Activated T-helper 2 cell treated with anti-CD3 and anti-CD28 coated beads, Interferon-gamma antibody, Interleukin-2, Interleukin-4, amounts not matched to agents 10 μg/mL and 5 μg/mL and 100 μg/mL, durations not matched to agents 14 hours and 24 hours and 36 hours (primary cell): ENCODE measurements at regions of chr2 and their contacts with region 1.

Region 1: DNA sequence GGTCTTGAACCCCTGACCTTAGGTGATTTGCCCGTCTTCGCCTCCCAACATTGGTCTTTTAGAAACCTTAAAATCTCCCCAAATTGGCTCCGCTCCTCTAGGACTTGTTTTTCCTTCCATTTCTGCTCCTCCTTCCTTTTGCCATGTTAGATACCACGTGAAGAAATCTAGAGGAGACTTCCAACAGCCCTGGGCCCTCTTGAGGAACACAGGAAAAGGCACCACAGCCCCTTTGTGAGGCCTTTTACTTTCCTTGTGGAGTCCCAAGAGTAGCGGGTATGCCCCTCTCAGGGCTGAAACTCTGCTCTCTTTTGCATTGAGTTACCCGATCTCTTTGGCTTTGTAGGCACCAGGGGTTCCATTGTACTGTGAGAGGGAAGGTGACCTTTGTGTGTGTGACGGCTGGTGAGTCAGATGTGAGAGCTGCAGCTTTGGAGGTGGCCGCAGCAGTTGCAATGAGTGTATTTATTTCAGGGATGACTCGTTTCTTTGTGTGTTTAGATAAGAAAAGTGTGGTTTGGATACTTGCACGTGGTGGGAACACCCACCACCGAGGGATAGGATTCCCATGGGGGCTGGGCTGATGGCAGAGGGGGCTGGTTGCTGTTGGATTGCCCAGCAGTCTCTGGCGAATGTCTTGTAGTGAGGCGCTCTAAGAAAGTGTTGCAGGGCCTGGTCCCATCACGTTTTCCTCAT is 218.4 kb upstream of the HS6ST1 start:
- DNase-seq: no peak
- H3K4me3 Mint-ChIP-seq: peak overlapping the region; percentile 35
- H3K27ac Mint-ChIP-seq: peak overlapping the region; percentile 88
- H3K4me1 Mint-ChIP-seq: peaks cover 44% of the 10 kb centered on the region
- H3K27me3 Mint-ChIP-seq: peaks cover 3% of the 10 kb centered on the region

Region 2: DNA sequence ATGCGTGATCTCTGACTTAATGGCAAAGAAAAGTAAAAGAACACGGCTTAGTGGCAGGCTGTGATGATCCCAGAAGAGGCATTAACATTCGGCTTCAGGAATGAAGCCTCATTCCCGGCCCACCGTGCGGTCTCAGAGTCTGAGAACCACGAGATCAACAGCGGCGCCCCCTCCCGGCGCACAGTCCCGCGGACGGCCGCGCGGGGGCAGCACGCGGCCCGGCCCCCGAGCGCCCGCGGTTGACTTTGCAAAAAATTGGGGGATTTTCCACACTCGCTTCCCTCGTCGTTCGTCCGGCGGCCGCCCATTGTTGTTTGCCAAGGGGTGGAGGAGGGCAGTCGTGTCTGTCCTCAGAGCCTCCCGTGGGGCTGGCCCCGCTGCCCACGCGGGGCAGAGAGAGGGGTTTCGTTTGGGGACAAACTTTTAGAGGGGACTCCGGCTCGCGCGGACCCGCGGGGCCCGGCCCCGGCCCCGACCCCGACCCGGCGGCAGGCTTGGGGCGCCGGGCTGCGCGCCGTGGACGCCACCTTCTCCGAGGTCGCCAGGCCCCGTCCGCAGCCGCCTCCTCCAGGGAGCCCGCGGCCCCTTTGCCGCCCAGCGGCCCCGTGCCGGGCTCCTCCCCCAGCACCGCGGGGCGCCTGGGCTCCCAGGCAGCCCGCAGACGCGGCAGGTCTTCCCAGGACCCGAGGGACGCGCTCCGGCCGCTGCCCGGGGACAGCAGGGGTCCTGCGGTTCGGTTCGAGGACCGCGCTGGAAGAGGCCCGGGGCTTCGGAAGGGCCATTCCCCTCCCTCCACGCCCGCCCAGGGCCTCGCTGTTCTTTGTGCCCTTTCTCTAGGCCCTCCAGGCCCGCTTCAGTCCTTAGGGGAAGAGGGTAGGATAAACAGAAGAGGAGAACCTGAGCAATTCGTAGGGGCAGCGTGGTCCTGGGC is 215.0 kb before region 1 on chr2:
- intact Hi-C with region 1: loop called (anchors 2 kb)
- DNase-seq: peak; percentile 71
- H3K4me3 Mint-ChIP-seq: peak overlapping the region; percentile 51
- H3K27ac Mint-ChIP-seq: no peak overlapping the region
- H3K4me1 Mint-ChIP-seq: peaks cover 8% of the 10 kb centered on the region
- H3K27me3 Mint-ChIP-seq: peaks cover 12% of the 10 kb centered on the region

Region 3: GRCh38 chr2:128520791-128521190 is 16.3 kb before region 1 on chr2:
- intact Hi-C with region 1: loop called (anchors 1 kb)
- DNase-seq: peak; percentile 57
- H3K4me3 Mint-ChIP-seq: no peak overlapping the region
- H3K27ac Mint-ChIP-seq: peak overlapping the region; percentile 5
- H3K4me1 Mint-ChIP-seq: peaks cover 21% of the 10 kb centered on the region
- H3K27me3 Mint-ChIP-seq: peaks cover 8% of the 10 kb centered on the region

Region 4: GRCh38 chr2:128623776-128624424 is 86.8 kb after region 1 on chr2:
- intact Hi-C with region 1: loop called (anchors 2 kb)
- DNase-seq: peak; percentile 33
- H3K4me3 Mint-ChIP-seq: peak overlapping the region; percentile 17
- H3K27ac Mint-ChIP-seq: peak overlapping the region; percentile 19
- H3K4me1 Mint-ChIP-seq: peaks cover 21% of the 10 kb centered on the region
- H3K27me3 Mint-ChIP-seq: peaks cover 53% of the 10 kb centered on the region

Region 5: GRCh38 chr2:128727914-128728313 is 190.8 kb after region 1 on chr2:
- intact Hi-C with region 1: loop called (anchors 5 kb)
- DNase-seq: no peak
- H3K4me3 Mint-ChIP-seq: no peak overlapping the region
- H3K27ac Mint-ChIP-seq: peak overlapping the region; percentile 8
- H3K4me1 Mint-ChIP-seq: peaks cover 25% of the 10 kb centered on the region
- H3K27me3 Mint-ChIP-seq: peaks cover 47% of the 10 kb centered on the region